Activated B cell treated with CpG ODN at 0.5 μM for 24 hours (primary cell): ENCODE measurements at regions of chr3 and their contacts with region 1.

Region 1: GRCh38 chr3:168040607-168041208 is 55.0 kb downstream of the GOLIM4 start:
- DNase-seq: no peak
- ATAC-seq: no peak
- H3K4me3 Mint-ChIP-seq: no peak overlapping the region
- H3K27ac Mint-ChIP-seq: no peak overlapping the region
- H3K4me1 Mint-ChIP-seq: no peaks in the 10 kb centered on the region
- H3K27me3 Mint-ChIP-seq: no peaks in the 10 kb centered on the region
- CTCF ChIP-seq: no peak

Region 2: DNA sequence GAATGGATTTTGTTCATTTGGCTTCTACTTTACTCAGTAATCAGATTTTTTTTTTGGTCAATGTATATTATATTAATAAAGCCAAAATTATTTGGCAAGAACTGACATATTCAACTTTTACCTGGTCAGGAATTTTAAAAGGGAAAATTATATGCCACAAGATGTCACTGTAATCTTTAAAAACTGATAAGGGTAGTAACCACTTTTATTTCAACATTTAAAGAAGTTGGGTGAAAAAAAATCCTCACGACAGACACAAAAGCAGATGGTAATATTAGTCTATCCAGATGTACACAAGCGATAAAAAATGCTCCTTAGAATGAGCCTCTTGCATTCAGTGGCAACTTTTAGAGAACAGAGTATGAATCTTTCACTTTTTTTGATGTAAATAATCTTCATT is 203.2 kb before region 1 on chr3:
- CTCF ChIA-PET with region 1: no interaction called
- POLR2A ChIA-PET with region 1: no interaction called
- intact Hi-C with region 1: loop called (anchors 2 kb)
- DNase-seq: no peak
- ATAC-seq: no peak
- H3K4me3 Mint-ChIP-seq: no peak overlapping the region
- H3K27ac Mint-ChIP-seq: no peak overlapping the region
- H3K4me1 Mint-ChIP-seq: peaks cover 8% of the 10 kb centered on the region
- H3K27me3 Mint-ChIP-seq: no peaks in the 10 kb centered on the region
- CTCF ChIP-seq: no peak

Region 3: GRCh38 chr3:168165390-168166269 is 124.9 kb after region 1 on chr3:
- CTCF ChIA-PET with region 1: interaction called, 116 read pairs
- POLR2A ChIA-PET with region 1: no interaction called
- intact Hi-C with region 1: no loop called
- DNase-seq: no peak
- ATAC-seq: peak; percentile 68
- H3K4me3 Mint-ChIP-seq: peak overlapping the region; percentile 57
- H3K27ac Mint-ChIP-seq: no peak overlapping the region
- H3K4me1 Mint-ChIP-seq: peaks cover 6% of the 10 kb centered on the region
- H3K27me3 Mint-ChIP-seq: no peaks in the 10 kb centered on the region
- CTCF ChIP-seq: peak; percentile 26